IMR-90 (cell line): ENCODE measurements at regions of chr9 and their contacts with region 1.

Region 1: GRCh38 chr9:20811872-20812271 is 127.8 kb downstream of the FOCAD start:
- DNase-seq: peak; percentile 76
- ATAC-seq: peak; percentile 83
- H3K4me3 ChIP-seq: no peak overlapping the region
- H3K27ac ChIP-seq: no peak overlapping the region
- H3K4me1 ChIP-seq: no peaks in the 10 kb centered on the region
- H3K27me3 ChIP-seq: no peaks in the 10 kb centered on the region
- CTCF ChIP-seq: no peak
- POLR2A ChIP-seq: no peak
- RAD21 ChIP-seq: no peak

Region 2: GRCh38 chr9:20335668-20336332 is 476.1 kb before region 1 on chr9:
- CTCF ChIA-PET with region 1: no interaction called
- POLR2A ChIA-PET with region 1: interaction called, 13 read pairs
- dilution Hi-C with region 1: no loop called
- in situ Hi-C with region 1: no loop called
- intact Hi-C with region 1: no loop called
- DNase-seq: no peak
- ATAC-seq: no peak
- H3K4me3 ChIP-seq: no peak overlapping the region
- H3K27ac ChIP-seq: no peak overlapping the region
- H3K4me1 ChIP-seq: no peaks in the 10 kb centered on the region; the same call in 1 of the 2 replicates
- H3K27me3 ChIP-seq: peaks cover 4% of the 10 kb centered on the region
- CTCF ChIP-seq: no peak
- POLR2A ChIP-seq: no peak
- RAD21 ChIP-seq: no peak